A549 (cell line): ENCODE measurements at regions of chr3 and their contacts with region 1.

Region 1: GRCh38 chr3:9946112-9947024 is 5.8 kb downstream of the PRRT3 start:
- DNase-seq: peak; percentile 89 to 95
- ATAC-seq: peak; percentile 77 to 91
- H3K4me3 ChIP-seq: peak overlapping the region; percentile 80
- H3K27ac ChIP-seq: peak overlapping the region; percentile 95 to 98
- H3K4me1 ChIP-seq: peaks cover 10% of the 10 kb centered on the region; the same call in 1 of the 3 replicates
- CTCF ChIP-seq: peak; percentile 79
- EP300 ChIP-seq: no peak
- POLR2A ChIP-seq: peak; percentile 70
- RAD21 ChIP-seq: peak; percentile 72 to 73; a peak in 4 of 5 replicates

Region 2: GRCh38 chr3:9695345-9695744 is 251.0 kb before region 1 on chr3:
- CTCF ChIA-PET with region 1: no interaction called
- POLR2A ChIA-PET with region 1: no interaction called
- DNase-seq: no peak
- ATAC-seq: no peak
- H3K4me3 ChIP-seq: no peak overlapping the region
- H3K27ac ChIP-seq: no peak overlapping the region
- H3K4me1 ChIP-seq: no peaks in the 10 kb centered on the region
- CTCF ChIP-seq: no peak
- EP300 ChIP-seq: no peak
- POLR2A ChIP-seq: no peak
- RAD21 ChIP-seq: no peak

Region 3: GRCh38 chr3:9833078-9833477 is 113.3 kb before region 1 on chr3:
- CTCF ChIA-PET with region 1: interaction called, 30 read pairs
- POLR2A ChIA-PET with region 1: no interaction called
- DNase-seq: no peak
- ATAC-seq: no peak
- H3K4me3 ChIP-seq: no peak overlapping the region
- H3K27ac ChIP-seq: no peak overlapping the region
- H3K4me1 ChIP-seq: no peaks in the 10 kb centered on the region
- CTCF ChIP-seq: no peak
- EP300 ChIP-seq: no peak
- POLR2A ChIP-seq: no peak
- RAD21 ChIP-seq: no peak

Region 4: DNA sequence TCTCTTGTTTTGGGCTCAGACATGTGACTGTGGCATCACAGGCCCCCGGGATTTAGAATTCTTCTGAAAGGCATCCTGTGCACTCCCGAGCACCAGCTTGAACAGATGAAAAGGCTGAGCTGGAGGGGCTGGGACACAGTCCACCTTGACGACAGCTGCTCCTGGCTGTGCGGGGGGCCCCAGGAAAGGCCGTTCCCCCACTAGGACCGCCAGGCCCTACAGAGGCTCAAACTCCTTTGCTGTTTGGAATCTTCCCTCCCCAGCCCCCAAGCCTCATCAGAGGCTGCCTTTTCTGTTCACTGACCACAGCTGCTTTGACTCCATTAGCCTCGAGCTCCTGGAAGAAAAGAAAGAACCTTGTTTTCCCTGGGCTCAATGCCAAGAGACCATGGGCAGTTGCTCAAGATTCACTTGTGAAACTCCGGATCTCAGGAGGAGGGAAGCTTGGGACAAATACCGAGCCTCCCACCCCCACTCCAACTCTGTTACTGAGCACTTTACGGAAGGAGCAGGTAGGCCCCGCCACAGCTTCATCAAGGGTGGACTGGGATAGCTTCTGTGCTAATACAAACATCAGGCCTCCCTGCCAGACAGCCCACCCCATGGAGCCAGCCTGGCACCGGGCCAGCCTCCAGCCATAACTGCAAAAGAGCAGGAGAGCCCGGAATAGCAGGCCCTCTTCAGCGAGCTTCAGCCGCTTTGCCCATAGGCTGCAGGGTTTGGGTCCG is 82.0 kb before region 1 on chr3:
- CTCF ChIA-PET with region 1: interaction called, 18 read pairs
- POLR2A ChIA-PET with region 1: interaction called, 6 read pairs
- DNase-seq: peak in 1 of 2 experiments; percentile 69
- ATAC-seq: peak in 1 of 2 experiments; percentile 52; a peak in 3 of 6 replicates
- H3K4me3 ChIP-seq: no peak overlapping the region
- H3K27ac ChIP-seq: peak overlapping the region; percentile 72 to 85
- H3K4me1 ChIP-seq: peaks cover 26% of the 10 kb centered on the region
- CTCF ChIP-seq: no peak
- EP300 ChIP-seq: no peak
- POLR2A ChIP-seq: no peak
- RAD21 ChIP-seq: no peak

Region 5: GRCh38 chr3:9909221-9910013 is 37.0 kb before region 1 on chr3:
- CTCF ChIA-PET with region 1: interaction called, 14 read pairs
- POLR2A ChIA-PET with region 1: interaction called, 5 read pairs
- DNase-seq: no peak
- ATAC-seq: no peak
- H3K4me3 ChIP-seq: no peak overlapping the region
- H3K27ac ChIP-seq: peak overlapping the region in 1 of 2 experiments; percentile 20; a peak in 1 of 6 replicates
- H3K4me1 ChIP-seq: peaks cover 26% of the 10 kb centered on the region
- CTCF ChIP-seq: no peak
- EP300 ChIP-seq: no peak
- POLR2A ChIP-seq: no peak
- RAD21 ChIP-seq: no peak

Region 6: GRCh38 chr3:9957214-9957613 is 10.8 kb after region 1 on chr3:
- CTCF ChIA-PET with region 1: interaction called, 26 read pairs
- POLR2A ChIA-PET with region 1: interaction called, 3 read pairs
- DNase-seq: no peak
- ATAC-seq: no peak
- H3K4me3 ChIP-seq: no peak overlapping the region
- H3K27ac ChIP-seq: no peak overlapping the region
- H3K4me1 ChIP-seq: peaks cover 11% of the 10 kb centered on the region
- CTCF ChIP-seq: peak; percentile 28; the same call in 2 of the 3 replicates
- EP300 ChIP-seq: no peak
- POLR2A ChIP-seq: no peak
- RAD21 ChIP-seq: peak; percentile 21 to 34; a peak in 1 of 5 replicates

Region 7: GRCh38 chr3:9986237-9986725 is 39.9 kb after region 1 on chr3:
- CTCF ChIA-PET with region 1: interaction called, 27 read pairs
- POLR2A ChIA-PET with region 1: interaction called, 5 read pairs
- DNase-seq: no peak
- ATAC-seq: peak; percentile 59 to 76
- H3K4me3 ChIP-seq: peak overlapping the region; percentile 73
- H3K27ac ChIP-seq: peak overlapping the region; percentile 74 to 88
- H3K4me1 ChIP-seq: peaks cover 17% of the 10 kb centered on the region
- CTCF ChIP-seq: no peak
- EP300 ChIP-seq: no peak
- POLR2A ChIP-seq: no peak
- RAD21 ChIP-seq: no peak